Activated CD4-positive, alpha-beta T cell treated with anti-CD3 and anti-CD28 coated beads for 36 hours (primary cell): ENCODE measurements at regions of chr5 and their contacts with region 1.

Region 1: DNA sequence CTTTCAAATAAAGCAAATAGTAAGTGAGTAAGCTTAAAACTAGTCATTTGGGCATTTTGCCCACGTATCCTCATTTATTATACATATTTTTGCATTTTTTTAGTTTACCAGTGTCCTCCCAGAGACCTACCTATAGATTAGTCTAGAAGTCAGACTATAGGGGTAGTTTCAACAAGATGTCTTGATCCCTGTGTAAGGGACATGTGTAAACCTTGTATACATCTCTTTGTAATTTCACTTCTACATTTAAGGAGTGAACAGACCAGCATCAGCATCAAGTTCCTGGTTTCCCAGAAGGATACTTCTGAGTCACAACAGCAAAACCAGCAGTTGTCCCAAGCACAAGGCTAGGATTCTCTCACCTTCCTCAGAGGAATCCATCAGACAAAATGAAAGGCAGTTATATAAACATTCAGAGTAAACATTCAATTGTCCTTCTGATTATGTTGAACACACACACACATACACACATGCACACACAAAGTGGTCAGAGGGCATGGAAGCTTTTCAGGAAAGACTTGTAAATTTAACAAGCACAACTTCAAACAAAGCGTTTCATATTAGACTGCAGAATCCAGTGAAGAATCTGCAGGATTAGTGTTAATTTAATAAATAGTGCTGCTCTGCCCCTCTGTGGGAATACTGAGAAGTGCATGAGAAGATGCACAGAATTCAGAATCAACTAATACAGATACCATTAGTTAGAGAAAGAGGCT is 55.4 kb downstream of the HINT1 start:
- DNase-seq: peak; percentile 30
- ATAC-seq: peak; percentile 79
- H3K4me3 Mint-ChIP-seq: no peak overlapping the region
- H3K27ac Mint-ChIP-seq: no peak overlapping the region
- H3K4me1 Mint-ChIP-seq: peaks cover 4% of the 10 kb centered on the region
- H3K27me3 Mint-ChIP-seq: no peaks in the 10 kb centered on the region

Region 2: GRCh38 chr5:129904102-129904666 is 1205.5 kb before region 1 on chr5 and contains the start of gene CHSY3:
- CTCF ChIA-PET with region 1: no interaction called
- POLR2A ChIA-PET with region 1: no interaction called
- intact Hi-C with region 1: loop called in 1 of 2 experiments (anchors 10 kb)
- DNase-seq: peak; percentile 69
- ATAC-seq: peak; percentile 89
- H3K4me3 Mint-ChIP-seq: peak within 1 kb of the TSS; percentile 63
- H3K27ac Mint-ChIP-seq: no peak within 1 kb of the TSS
- H3K4me1 Mint-ChIP-seq: peaks cover 11% of the 10 kb centered on the region
- H3K27me3 Mint-ChIP-seq: peaks cover 41% of the 10 kb centered on the region
- total RNA-seq, gene CHSY3: not detected

Region 3: GRCh38 chr5:130109152-130109551 is 1000.5 kb before region 1 on chr5:
- CTCF ChIA-PET with region 1: no interaction called
- POLR2A ChIA-PET with region 1: no interaction called
- intact Hi-C with region 1: loop called in 1 of 2 experiments (anchors 1 kb)
- DNase-seq: no peak
- ATAC-seq: peak; percentile 49
- H3K4me3 Mint-ChIP-seq: no peak overlapping the region
- H3K27ac Mint-ChIP-seq: no peak overlapping the region
- H3K4me1 Mint-ChIP-seq: peaks cover 4% of the 10 kb centered on the region
- H3K27me3 Mint-ChIP-seq: peaks cover 1% of the 10 kb centered on the region